Sciatic nerve (tissue), 2 donors: ENCODE measurements at regions of chr6 and their contacts with region 1.

Region 1: DNA sequence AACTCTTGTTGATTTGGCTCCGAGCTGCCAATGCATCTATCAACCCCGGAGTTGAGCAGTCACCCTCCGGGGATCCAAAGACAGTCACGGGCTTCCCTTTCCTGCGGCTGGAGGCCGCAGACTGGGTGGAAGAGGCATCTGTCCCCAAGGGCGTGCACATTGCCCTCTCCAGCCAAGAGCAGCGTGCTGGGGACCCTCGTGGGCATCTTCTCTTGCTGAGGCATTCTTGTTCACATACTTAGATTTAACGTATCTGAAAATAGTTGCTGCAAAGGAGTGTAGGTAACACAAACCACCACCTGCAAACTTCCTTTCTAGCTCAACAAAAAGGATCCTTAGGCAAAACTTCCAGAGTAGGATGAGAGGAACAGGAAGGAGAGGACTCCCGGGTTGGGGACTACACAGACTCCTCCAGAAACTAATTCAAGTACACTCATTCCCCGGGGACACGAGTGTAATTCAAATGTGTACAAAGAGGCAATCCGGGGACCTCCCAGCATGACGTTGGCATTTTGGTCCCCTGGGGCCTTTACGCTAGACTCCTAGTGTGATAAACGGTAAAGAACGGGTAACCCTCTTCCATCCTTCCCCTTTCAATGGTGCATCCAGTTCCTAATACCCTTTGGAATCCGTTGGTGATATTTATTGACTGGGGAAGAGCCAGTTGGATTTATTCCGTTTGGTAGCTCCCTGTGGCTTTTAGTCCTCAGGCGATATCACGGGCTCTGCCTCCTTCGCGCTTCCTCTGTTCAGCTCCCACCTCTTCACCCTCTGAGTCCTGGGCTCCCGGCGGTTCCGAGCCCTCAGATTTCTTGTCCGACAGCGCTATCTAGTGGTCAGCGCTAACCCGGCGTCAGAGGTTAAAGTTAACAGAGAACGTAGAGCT is 2.7 kb upstream of the COL12A1 start:
- DNase-seq: peak; percentile 94
- ATAC-seq: peak; percentile 63

Region 2: DNA sequence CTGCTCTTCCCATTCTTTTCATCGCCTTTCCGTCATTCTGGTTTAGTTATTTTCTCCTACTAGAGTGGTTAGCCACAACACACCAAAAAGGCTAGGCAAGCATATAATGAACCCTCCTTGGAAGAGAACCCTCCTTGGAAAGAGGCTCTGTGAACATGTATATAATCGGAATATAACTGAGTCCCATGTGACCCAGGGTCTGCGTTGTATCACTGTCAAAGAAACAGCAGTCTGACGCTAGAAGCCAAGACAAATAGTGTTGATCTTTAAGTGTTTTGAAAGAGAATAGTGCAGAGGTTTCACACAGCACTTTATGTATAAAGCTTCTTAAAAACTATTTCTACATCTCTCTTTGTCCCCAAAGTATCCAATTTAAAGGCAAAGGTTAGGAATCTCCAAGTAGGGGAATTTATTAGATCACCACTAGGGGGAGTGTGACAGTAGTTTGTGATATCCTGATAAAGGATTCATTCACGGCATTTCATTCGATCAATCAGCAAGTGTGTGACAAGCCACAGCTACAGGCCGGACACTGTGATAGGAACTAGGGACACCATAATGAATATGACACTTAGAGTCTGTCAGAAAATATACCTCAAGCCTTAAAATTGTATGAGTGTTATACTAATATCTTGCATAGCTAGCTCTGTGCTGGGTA is 1117.3 kb before region 1 on chr6:
- intact Hi-C with region 1: loop called (anchors 5 kb)
- DNase-seq: no peak
- ATAC-seq: peak; percentile 70

Region 3: GRCh38 chr6:74410630-74411029 is 797.9 kb before region 1 on chr6:
- intact Hi-C with region 1: loop called (anchors 10 kb)
- DNase-seq: no peak
- ATAC-seq: no peak

Region 4: DNA sequence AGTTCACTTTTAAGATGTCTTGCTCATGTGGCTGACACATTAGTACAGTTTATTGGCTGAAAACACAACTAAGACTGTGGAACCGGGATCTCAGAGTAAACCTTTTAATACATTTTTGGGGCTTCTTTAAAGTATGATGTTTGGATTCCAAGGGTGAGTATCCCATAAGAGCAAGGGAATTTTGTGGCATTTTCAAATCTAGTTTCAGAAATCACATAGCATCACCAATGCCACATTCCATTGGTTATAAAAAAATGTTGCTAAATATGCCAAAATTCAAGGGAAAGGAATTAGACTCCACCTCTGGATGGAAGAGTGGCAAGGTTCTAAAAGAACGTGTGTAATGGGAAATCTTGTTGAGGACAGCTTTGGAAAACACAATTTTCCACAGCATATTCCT is 341.2 kb before region 1 on chr6:
- intact Hi-C with region 1: no loop called
- DNase-seq: no peak
- ATAC-seq: no peak